Naive thymus-derived CD4-positive, alpha-beta T cell (primary cell): ENCODE measurements at regions of chr1 and their contacts with region 1.

Region 1: GRCh38 chr1:227734856-227735538 is at the starts of genes JMJD4 and SNAP47:
- DNase-seq: peak; percentile 85 to 98 (median 93)
- ATAC-seq: peak; percentile 94
- H3K4me3 ChIP-seq: peak within 1 kb of the TSS; percentile 72
- H3K4me3 Mint-ChIP-seq: peak within 1 kb of the TSS; percentile 87 to 97 (median 90)
- H3K27ac ChIP-seq: peak within 1 kb of the TSS; percentile 87
- H3K27ac Mint-ChIP-seq: peak within 1 kb of the TSS; percentile 62 to 96 (median 89)
- H3K4me1 ChIP-seq: peaks cover 3 to 16% of the 10 kb centered on the region in 2 donors
- H3K4me1 Mint-ChIP-seq: peaks cover 28 to 59% (median 40%) of the 10 kb centered on the region in 7 donors
- H3K27me3 ChIP-seq: no peaks in the 10 kb centered on the region
- H3K27me3 Mint-ChIP-seq: no peaks in the 10 kb centered on the region
- total RNA-seq, gene JMJD4: 12.1 to 36.8 (median 26.3) TPM
- total RNA-seq, gene SNAP47: 18.5 to 31.8 (median 27.8) TPM

Region 2: DNA sequence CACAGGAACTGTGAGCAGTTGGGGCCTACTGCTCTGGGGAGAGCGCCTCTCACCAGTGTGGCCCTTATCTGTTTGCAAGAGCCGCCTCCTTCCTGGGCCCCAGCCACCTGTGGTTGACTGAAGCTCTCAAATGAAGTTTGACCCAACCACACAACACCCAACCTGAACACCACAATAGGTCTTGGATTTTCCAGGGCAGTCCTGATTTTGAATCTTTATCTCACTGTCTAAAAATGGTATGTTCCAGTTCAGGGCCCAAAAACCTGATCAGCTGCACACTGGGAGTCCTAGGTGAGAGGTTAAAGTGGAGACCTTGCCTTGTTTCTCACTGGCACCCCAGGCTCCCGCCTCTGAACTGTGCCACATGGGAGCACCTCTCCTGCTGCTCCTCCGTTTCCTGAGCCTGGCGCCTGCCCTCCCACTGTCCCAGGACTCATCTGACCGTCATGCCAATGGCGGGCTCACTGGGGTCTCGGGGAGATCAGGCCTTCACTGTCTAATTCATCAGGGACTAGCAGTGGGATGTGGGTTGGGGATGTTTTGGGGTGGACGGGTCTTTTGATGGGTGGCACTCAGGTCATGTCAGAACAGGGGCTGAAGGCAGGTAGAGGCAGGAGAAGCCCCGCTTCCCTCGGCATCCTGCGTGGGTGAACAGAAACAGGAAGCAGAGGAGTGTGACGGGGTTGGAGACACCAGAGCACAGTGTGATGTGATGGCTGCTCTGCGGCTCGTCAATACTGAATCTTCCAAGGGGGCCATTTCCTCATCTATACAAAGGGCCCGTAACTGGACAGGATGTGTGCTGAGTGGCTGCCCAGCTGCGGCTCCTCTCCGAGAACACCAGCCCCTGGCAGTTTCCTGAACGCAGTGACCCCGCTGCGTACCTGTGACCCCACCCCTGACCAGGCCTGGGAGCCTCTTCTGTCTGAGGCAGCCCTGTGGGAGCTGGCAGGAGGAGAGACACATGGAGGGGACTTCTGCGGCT is 936.3 kb before region 1 on chr1:
- CTCF ChIA-PET with region 1: no interaction called
- POLR2A ChIA-PET with region 1: no interaction called
- intact Hi-C with region 1: no loop called
- DNase-seq: peak; percentile 24 to 75 (median 67)
- ATAC-seq: peak; percentile 85
- H3K4me3 ChIP-seq: peak overlapping the region; percentile 33
- H3K4me3 Mint-ChIP-seq: peak overlapping the region; percentile 66 to 86 (median 72)
- H3K27ac ChIP-seq: peak overlapping the region; percentile 67
- H3K27ac Mint-ChIP-seq: peak overlapping the region; percentile 96 to 100 (median 99)
- H3K4me1 ChIP-seq: peaks cover 31 to 33% of the 10 kb centered on the region in 2 donors
- H3K4me1 Mint-ChIP-seq: peaks cover 27 to 47% (median 40%) of the 10 kb centered on the region in 7 donors
- H3K27me3 ChIP-seq: no peaks in the 10 kb centered on the region
- H3K27me3 Mint-ChIP-seq: peaks cover 0 to 12% (median 0%) of the 10 kb centered on the region in 5 donors

Region 3: GRCh38 chr1:227489572-227489971 is 245.4 kb before region 1 on chr1:
- CTCF ChIA-PET with region 1: no interaction called
- POLR2A ChIA-PET with region 1: no interaction called
- intact Hi-C with region 1: loop called in 1 of 2 experiments (anchors 10 kb)
- DNase-seq: no peak
- ATAC-seq: no peak
- H3K4me3 ChIP-seq: no peak overlapping the region
- H3K4me3 Mint-ChIP-seq: no peak overlapping the region
- H3K27ac ChIP-seq: no peak overlapping the region
- H3K27ac Mint-ChIP-seq: no peak overlapping the region
- H3K4me1 ChIP-seq: no peaks in the 10 kb centered on the region
- H3K4me1 Mint-ChIP-seq: no peaks in the 10 kb centered on the region
- H3K27me3 ChIP-seq: no peaks in the 10 kb centered on the region
- H3K27me3 Mint-ChIP-seq: peaks cover 0 to 2% (median 0%) of the 10 kb centered on the region in 5 donors

Region 4: DNA sequence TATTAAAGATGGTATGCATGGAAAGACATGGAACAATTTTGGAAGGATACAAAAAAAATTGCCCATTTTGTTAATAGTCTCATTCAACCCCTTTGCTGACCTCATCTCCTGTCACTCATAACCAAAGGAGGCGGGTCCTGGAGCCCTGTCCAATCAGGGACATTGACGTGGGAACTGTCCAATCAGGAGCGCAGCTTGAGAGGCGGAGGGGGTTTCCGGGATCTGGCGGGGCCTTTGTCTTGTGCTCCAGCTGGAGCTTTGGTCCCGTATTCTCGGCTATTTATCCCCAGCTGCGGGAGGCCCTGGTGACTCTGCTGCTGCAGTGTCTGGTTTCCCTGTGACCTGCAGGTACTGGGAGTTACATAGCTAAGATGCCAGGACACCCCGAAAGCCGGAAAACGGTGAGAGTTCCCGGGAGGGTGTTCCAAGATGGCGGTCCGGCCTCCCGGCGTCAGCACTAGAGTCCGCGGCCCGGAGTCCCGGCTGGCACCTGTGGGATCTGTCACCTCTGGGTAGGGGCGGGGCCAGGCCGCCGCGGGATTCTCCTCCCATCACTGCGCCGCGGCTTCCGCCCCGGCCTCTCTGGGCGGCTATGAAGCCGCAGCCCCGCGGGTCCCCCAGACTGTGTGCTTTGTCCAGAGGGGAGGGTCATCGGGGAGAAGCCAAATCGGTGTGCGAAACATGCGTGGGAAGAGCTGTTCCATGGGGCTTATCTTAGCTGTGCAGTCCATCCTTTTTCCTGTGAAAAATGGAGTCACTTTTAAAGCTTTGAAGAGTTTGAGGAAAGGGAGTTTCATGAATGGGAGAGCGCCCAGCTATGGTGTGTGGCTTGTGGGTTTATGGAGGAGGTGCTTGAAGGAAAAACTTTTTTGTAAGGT is 171.4 kb before region 1 on chr1 and contains the start of gene ZNF678:
- CTCF ChIA-PET with region 1: no interaction called
- POLR2A ChIA-PET with region 1: no interaction called
- intact Hi-C with region 1: loop called in 1 of 2 experiments (anchors 2 kb)
- DNase-seq: peak; percentile 58 to 86 (median 84)
- ATAC-seq: peak; percentile 95
- H3K4me3 ChIP-seq: peak within 1 kb of the TSS; percentile 88
- H3K4me3 Mint-ChIP-seq: peak within 1 kb of the TSS; percentile 87 to 97 (median 94)
- H3K27ac ChIP-seq: peak within 1 kb of the TSS; percentile 82
- H3K27ac Mint-ChIP-seq: peak within 1 kb of the TSS; percentile 71 to 95 (median 91)
- H3K4me1 ChIP-seq: peaks cover 4 to 5% of the 10 kb centered on the region in 2 donors
- H3K4me1 Mint-ChIP-seq: peaks cover 17 to 57% (median 40%) of the 10 kb centered on the region in 7 donors
- H3K27me3 ChIP-seq: no peaks in the 10 kb centered on the region
- H3K27me3 Mint-ChIP-seq: peaks cover 22 to 27% (median 27%) of the 10 kb centered on the region in 5 donors
- total RNA-seq, gene ZNF678: 3.2 to 8.3 (median 7.4) TPM

Region 5: GRCh38 chr1:227999056-227999930 is 264.3 kb after region 1 on chr1:
- CTCF ChIA-PET with region 1: no interaction called
- POLR2A ChIA-PET with region 1: no interaction called
- intact Hi-C with region 1: no loop called
- DNase-seq: peak; percentile 42 to 74 (median 60)
- ATAC-seq: peak; percentile 93
- H3K4me3 ChIP-seq: no peak overlapping the region
- H3K4me3 Mint-ChIP-seq: no peak overlapping the region
- H3K27ac ChIP-seq: no peak overlapping the region
- H3K27ac Mint-ChIP-seq: no peak overlapping the region
- H3K4me1 ChIP-seq: no peaks in the 10 kb centered on the region
- H3K4me1 Mint-ChIP-seq: no peaks in the 10 kb centered on the region
- H3K27me3 ChIP-seq: peaks cover under 1 to 5% of the 10 kb centered on the region in 2 donors
- H3K27me3 Mint-ChIP-seq: peaks cover 9 to 44% (median 25%) of the 10 kb centered on the region in 5 donors

Region 6: DNA sequence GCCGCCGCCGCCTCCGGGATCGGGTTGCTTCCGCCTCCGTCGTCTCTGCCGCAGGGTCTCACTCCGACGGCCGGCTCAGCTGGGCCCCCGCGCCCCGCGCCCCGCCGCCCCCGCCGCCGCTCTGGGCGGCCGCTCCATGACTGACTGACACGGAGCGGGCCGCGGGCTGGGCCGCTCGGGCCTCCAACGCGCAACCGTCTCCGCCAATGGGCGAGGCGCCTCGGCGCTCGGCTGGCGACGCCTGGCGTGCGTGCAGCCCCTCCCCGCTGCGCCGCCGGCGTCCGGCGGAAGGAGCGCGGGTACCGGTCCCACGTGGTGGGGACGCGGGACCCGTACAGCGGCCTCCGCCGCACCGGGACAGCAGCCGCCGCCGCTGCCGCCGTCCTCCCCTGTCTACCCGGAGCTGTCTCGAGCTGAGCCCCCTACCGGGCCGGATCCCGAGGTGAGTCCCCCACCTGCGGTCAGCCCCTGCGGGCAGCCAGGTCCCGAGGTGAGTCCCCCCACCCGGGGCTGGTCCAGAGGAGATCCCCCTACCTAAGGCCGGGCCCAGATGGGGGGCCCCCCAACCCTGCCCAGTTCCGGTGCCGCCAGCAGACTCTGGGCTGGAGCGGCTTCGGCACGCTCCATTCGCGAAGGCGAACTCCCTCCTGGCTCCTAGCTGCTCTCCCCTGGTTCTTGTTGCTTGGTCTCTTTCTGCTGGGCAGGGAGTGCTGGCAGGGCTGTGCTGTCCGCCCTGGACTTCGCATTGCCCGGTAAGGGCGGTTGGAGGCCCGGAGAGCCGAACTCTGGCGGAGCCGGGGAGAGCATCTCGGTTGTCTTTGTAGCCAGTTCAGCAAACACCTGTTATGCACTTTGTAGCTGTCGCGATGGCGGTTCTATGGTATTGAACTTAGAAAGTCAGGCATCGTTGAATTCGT is 1891.2 kb after region 1 on chr1 and contains the starts of genes TAF5L and URB2:
- CTCF ChIA-PET with region 1: no interaction called
- POLR2A ChIA-PET with region 1: no interaction called
- intact Hi-C with region 1: loop called in 1 of 2 experiments (anchors 5 kb)
- DNase-seq: peak; percentile 81 to 91 (median 85)
- ATAC-seq: peak; percentile 97
- H3K4me3 ChIP-seq: peak within 1 kb of the TSS; percentile 93
- H3K4me3 Mint-ChIP-seq: peak within 1 kb of the TSS; percentile 94 to 100 (median 98)
- H3K27ac ChIP-seq: peak within 1 kb of the TSS; percentile 80
- H3K27ac Mint-ChIP-seq: peak within 1 kb of the TSS; percentile 93 to 98 (median 97)
- H3K4me1 ChIP-seq: peaks cover 21 to 27% of the 10 kb centered on the region in 2 donors
- H3K4me1 Mint-ChIP-seq: peaks cover 39 to 69% (median 59%) of the 10 kb centered on the region in 7 donors
- H3K27me3 ChIP-seq: no peaks in the 10 kb centered on the region
- H3K27me3 Mint-ChIP-seq: no peaks in the 10 kb centered on the region
- total RNA-seq, gene TAF5L: 17.3 to 27.2 (median 19.8) TPM
- total RNA-seq, gene URB2: 6.2 to 18.2 (median 11.0) TPM